Psoas muscle (tissue), 8 donors: ENCODE measurements at regions of chr10 and their contacts with region 1.

Region 1: DNA sequence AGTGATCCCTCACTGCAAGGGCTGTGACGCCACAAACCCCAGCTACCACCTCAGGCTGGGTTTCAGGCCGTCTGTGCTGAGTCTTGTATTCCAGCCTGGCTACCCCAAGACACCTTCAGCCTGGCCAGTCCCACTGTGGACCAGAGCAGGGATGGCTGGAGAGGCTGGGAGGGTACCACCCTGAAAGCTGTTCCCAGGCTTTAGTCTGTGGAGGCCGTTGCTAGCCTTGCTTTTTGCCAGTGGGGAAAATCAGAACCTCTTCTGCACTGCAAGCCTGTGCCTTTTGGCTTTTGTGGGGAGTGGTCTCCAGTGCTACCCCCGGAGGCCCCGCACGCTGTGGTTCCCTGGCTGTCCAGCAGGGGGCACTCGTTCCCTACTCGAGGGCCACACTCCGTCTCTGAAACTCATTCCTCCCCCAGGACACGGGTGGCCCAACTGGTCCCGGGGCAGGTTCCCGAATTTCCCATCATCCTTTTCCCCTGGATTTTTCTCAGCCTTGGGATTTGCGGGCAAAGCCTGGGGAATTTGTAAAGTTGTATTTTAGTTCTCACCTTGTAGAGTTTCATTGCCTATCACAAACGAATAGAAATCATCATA is 128.4 kb upstream of the BTBD16 start:
- DNase-seq: peak; percentile 51 to 75
- ATAC-seq: peak in 2 of 4 donors; percentile 24 to 35
- H3K4me3 ChIP-seq: no peak overlapping the region
- H3K27ac ChIP-seq: peak overlapping the region; percentile 90
- H3K4me1 ChIP-seq: peaks cover 69% of the 10 kb centered on the region
- H3K27me3 ChIP-seq: no peaks in the 10 kb centered on the region
- CTCF ChIP-seq: peak; percentile 95

Region 2: DNA sequence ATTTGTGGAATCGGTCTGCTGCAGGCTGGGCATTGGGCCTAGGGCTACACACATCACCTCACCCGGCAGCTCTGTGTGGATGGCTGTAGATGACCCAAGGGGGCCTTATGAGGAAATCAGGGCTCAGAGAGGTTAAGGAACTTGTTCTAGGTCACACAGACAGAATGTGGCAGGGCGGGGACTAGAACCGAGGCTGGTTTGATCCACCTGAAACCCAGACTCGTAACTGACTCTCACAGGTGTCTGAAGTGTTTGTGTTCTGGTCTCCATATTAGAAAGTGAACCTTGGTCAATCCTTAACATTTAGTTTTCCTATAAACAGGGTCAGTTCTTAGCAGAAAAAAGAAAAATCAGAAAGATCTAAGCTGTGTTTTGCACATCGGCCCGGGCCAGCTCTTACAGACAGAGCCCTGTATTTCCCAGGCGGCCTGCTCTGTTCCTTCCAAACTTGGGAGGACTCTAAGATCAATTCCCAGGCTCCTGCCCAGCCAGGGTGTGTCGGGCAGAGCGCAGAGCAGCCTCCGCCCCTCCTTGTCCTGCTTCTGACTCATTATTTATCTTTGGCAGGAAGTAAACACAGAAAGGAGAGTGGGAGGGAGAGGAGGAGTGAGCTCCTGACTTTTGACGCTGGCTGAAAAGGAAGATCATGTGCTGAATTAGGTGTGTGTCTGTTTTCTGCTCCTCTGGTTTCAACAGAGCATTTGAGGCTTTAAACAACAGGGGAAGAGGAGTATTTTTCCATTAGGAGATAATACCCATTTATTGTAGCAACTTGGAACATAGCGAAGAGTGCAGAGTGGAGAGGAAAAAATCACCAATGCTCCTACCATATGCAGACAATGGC is 79.7 kb before region 1 on chr10:
- intact Hi-C with region 1: loop called in 1 of 2 experiments (anchors 2 kb)
- DNase-seq: peak; percentile 84 to 94
- ATAC-seq: peak; percentile 97 to 99 (median 98)
- H3K4me3 ChIP-seq: no peak overlapping the region
- H3K27ac ChIP-seq: peak overlapping the region; percentile 85
- H3K4me1 ChIP-seq: peaks cover 38% of the 10 kb centered on the region
- H3K27me3 ChIP-seq: no peaks in the 10 kb centered on the region
- CTCF ChIP-seq: no peak

Region 3: DNA sequence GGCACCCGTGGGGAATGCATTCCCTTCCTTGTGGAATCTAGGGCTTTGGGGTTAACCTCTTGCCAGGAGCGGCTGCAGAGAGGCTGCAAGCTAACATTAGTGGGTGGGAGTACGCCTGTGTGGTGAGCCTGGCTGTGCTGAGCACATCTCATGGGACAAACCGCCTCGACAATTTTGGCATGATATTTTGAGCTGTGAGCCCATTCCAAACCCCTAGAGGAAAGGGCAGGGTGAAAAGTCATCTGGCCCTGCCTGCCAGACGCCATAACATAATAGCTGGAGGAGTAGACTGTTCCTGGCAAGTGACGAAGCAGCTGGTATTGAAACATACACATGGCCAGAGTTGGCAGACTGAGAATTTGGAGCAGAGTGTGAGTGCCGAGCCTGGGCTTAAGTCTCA is 43.8 kb before region 1 on chr10:
- intact Hi-C with region 1: no loop called
- DNase-seq: peak in 1 of 2 donors; percentile 79
- ATAC-seq: peak; percentile 77 to 86 (median 82)
- H3K4me3 ChIP-seq: no peak overlapping the region
- H3K27ac ChIP-seq: peak overlapping the region; percentile 47
- H3K4me1 ChIP-seq: peaks cover 28% of the 10 kb centered on the region
- H3K27me3 ChIP-seq: no peaks in the 10 kb centered on the region
- CTCF ChIP-seq: no peak

Region 4: DNA sequence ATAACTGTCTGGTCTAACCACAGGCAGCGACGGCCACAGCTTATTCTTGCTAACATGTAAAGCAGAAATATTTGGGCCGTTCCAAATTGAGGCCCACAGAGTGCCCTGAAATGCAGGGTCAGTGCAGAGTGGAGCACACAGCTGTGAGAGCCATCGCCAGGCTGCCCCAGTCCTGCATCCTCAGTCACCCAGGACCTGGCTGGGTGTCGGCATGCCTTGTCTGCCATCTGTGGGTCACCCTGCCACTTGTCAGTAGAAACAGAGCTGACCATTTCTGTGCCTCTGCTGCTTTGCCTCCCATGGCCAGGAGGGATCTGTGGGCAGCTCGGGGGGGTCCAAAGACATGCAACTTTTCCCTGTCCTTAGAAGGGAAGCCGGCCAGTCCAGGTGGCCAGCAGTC is 71.0 kb after region 1 on chr10:
- intact Hi-C with region 1: no loop called
- DNase-seq: no peak
- ATAC-seq: peak in 1 of 4 donors; percentile 33
- H3K4me3 ChIP-seq: no peak overlapping the region
- H3K27ac ChIP-seq: no peak overlapping the region
- H3K4me1 ChIP-seq: no peaks in the 10 kb centered on the region
- H3K27me3 ChIP-seq: no peaks in the 10 kb centered on the region
- CTCF ChIP-seq: no peak

Region 5: DNA sequence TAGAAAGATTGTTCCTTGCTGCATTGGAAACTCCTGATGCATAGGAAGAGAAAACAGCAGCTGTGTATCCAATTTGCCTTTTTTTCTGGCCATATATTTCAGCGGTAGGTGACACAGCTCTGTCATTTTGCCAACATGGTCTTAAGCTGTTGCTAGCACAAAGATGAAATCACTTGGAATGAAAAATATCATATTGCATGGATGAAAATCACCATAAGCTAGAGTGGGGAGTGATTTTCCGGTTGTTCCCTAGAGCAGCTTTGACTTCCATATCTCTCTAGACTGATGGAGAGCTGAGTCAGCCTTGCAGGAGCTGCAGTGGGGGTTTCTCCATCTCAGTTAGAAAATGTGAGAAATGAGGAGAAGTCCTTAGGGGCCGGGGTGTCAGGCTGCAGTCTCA is 90.0 kb after region 1 on chr10:
- intact Hi-C with region 1: loop called in 1 of 2 experiments (anchors 5 kb)
- DNase-seq: no peak
- ATAC-seq: peak in 1 of 4 donors; percentile 32
- H3K4me3 ChIP-seq: no peak overlapping the region
- H3K27ac ChIP-seq: peak overlapping the region; percentile 82
- H3K4me1 ChIP-seq: peaks cover 31% of the 10 kb centered on the region
- H3K27me3 ChIP-seq: no peaks in the 10 kb centered on the region
- CTCF ChIP-seq: no peak